ENCODE measurements at regions of chr10 and their contacts with region 1.

Region 1: GRCh38 chr10:51137756-51138529 is 63.7 kb downstream of the PRKG1 start:
- DNase-seq: no peak
- ATAC-seq: no peak
- H3K4me3 ChIP-seq: no peak overlapping the region
- H3K27ac ChIP-seq: no peak overlapping the region
- H3K4me1 ChIP-seq: peaks cover 3% of the 10 kb centered on the region
- H3K27me3 ChIP-seq: no peaks in the 10 kb centered on the region

Region 2: GRCh38 chr10:51092402-51092801 is 45.5 kb before region 1 on chr10:
- intact Hi-C with region 1: no loop called
- DNase-seq: peak; percentile 86 to 94 (median 87)
- ATAC-seq: peak; percentile 87 to 93
- H3K4me3 ChIP-seq: no peak overlapping the region
- H3K27ac ChIP-seq: peak overlapping the region; percentile 3
- H3K4me1 ChIP-seq: peaks cover 6% of the 10 kb centered on the region
- H3K27me3 ChIP-seq: no peaks in the 10 kb centered on the region

Region 3: DNA sequence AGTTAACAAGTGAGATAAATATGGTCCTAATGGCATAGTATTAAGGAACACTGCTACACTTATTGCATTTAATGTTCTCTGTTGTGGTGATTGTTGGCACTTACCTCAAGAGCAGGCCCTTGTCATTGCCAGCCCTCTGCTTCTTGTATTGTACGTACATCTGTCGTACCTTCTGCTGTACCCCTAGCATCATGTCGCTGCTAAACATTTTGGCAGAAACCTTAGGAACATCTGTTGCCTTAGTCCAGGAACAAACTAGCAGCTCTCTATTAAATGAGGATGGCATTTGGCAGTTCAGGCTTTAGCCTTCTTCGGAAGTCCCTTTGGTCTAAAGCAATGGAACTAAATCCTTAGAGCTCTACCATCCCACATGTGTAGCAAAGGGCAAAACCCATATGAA is 16.1 kb before region 1 on chr10:
- intact Hi-C with region 1: loop called in 1 of 4 experiments (anchors 2 kb)
- DNase-seq: no peak
- ATAC-seq: no peak
- H3K4me3 ChIP-seq: no peak overlapping the region
- H3K27ac ChIP-seq: no peak overlapping the region
- H3K4me1 ChIP-seq: no peaks in the 10 kb centered on the region
- H3K27me3 ChIP-seq: no peaks in the 10 kb centered on the region